Mucosa of descending colon (tissue), 3 donors: ENCODE measurements at regions of chr11 and their contacts with region 1.

Region 1: GRCh38 chr11:120108154-120108865 is 29.6 kb downstream of the TRIM29 start:
- DNase-seq: peak in 2 of 3 donors; percentile 80
- ATAC-seq: peak; percentile 91
- H3K4me3 ChIP-seq: no peak overlapping the region
- H3K4me1 ChIP-seq: no peaks in the 10 kb centered on the region
- CTCF ChIP-seq: peak; percentile 97

Region 2: GRCh38 chr11:119481021-119481666 is 627.2 kb before region 1 on chr11:
- intact Hi-C with region 1: loop called (anchors 5 to 10 kb)
- DNase-seq: peak; percentile 73 to 88 (median 88)
- ATAC-seq: peak; percentile 94
- H3K4me3 ChIP-seq: no peak overlapping the region
- H3K4me1 ChIP-seq: no peaks in the 10 kb centered on the region
- CTCF ChIP-seq: peak; percentile 85

Region 3: GRCh38 chr11:120316842-120317688 is 208.8 kb after region 1 on chr11:
- intact Hi-C with region 1: no loop called
- DNase-seq: peak; percentile 84 to 91 (median 84)
- ATAC-seq: peak; percentile 95
- H3K4me3 ChIP-seq: no peak overlapping the region
- H3K4me1 ChIP-seq: peaks cover 14% of the 10 kb centered on the region
- CTCF ChIP-seq: no peak